ENCODE measurements at regions of chr15 and their contacts with region 1.

Region 1: DNA sequence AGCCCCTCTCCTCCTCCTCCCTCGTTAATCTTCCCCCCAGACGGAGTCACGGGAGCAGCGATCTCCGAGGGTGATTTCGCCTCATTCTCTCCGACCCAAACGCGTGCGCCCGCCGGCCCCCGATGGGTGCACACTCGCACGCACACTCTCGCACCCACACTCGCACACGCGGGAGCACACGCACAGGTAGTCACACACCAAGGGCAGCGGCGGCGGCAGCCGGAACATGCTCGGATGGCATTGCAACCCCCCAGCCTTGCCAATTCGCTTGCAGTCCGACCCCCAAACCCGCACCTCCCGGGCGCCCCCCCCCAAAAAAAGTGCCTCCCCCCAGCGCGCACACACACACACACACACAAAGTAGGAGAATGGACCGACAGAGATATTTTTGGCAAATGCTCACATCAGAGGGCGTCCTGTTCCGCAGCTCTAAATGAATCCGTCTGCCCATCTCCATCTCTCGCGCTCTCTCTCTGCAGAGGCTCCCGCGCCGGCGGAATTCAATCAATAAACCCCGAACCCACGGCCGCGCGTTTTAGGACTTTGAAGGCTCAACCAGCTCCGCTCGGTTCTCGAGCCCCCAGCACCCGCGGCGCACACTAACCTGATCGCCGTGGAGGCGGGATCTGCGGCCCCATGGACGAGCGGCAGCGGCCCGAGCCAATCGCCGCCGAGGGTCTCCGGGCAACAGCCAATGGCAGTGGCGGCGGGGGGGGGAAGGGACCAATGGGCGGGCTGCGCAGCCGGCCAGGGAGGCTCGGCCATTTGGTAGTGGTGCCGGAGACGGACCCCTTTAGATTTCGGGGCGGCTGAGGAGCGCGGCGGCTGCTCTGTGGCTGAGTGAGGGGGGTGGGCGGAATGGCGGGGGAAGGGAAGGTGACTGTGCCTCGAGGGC is at the start of gene ANP32A:
- DNase-seq: peak; percentile 81 to 98
- H3K4me3 ChIP-seq: peak within 1 kb of the TSS; percentile 90 to 96
- H3K27ac ChIP-seq: peak within 1 kb of the TSS; percentile 98
- H3K4me1 ChIP-seq: peaks cover 0 to 10% of the 10 kb centered on the region in 2 donors
- H3K27me3 ChIP-seq: no peaks in the 10 kb centered on the region
- CTCF ChIP-seq: no peak
- total RNA-seq, gene ANP32A: 19.2 TPM

Region 2: DNA sequence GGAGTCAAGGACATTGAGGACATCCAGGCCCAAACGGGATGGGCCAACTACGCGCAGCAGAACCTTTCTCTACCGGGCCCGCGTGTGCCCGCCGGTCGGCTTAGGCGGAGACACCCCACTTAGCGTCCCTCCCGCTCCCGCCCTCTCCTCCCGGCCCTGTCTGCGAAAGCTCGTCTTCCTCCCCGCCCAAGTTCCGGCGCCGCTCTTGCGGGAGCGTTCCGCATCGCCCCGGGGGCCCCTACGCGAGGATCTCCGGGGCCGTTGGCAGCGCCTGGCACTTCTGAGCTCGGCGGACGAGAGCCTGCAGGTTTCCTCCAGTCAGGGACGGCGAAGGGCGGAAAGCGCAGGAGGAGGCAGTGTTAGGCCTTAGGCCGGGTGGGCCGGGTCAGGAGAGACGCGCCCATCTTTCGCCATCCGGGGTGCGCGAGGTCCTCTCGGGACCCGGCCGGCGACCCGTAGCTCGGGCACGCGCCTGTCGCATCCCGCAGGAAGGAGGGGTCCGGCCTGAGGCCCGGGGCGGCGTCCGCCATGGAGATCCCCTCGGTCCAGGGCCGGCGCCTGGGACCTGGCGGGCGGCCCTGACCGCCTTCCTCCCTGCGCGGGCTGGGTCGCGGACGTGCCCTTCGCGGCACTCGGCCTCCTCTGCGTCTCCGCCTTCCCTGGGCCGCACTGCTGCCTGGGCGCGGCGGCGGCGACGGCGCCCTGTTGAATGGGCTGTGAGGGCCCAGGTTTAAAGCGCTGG is 542.8 kb before region 1 on chr15 and contains the start of gene FEM1B:
- intact Hi-C with region 1: loop called (anchors 5 kb)
- DNase-seq: peak; percentile 56 to 94
- H3K4me3 ChIP-seq: peak within 1 kb of the TSS; percentile 74 to 93
- H3K27ac ChIP-seq: peak within 1 kb of the TSS; percentile 99
- H3K4me1 ChIP-seq: peaks cover 3 to 24% of the 10 kb centered on the region in 2 donors
- H3K27me3 ChIP-seq: no peaks in the 10 kb centered on the region
- CTCF ChIP-seq: no peak
- total RNA-seq, gene FEM1B: 57.0 TPM

Region 3: GRCh38 chr15:68584756-68585573 is 235.6 kb before region 1 on chr15:
- intact Hi-C with region 1: loop called (anchors 5 kb)
- DNase-seq: no peak
- H3K4me3 ChIP-seq: no peak overlapping the region
- H3K27ac ChIP-seq: peak overlapping the region; percentile 74 to 81
- H3K4me1 ChIP-seq: peaks cover 4 to 18% of the 10 kb centered on the region in 2 donors
- H3K27me3 ChIP-seq: no peaks in the 10 kb centered on the region
- CTCF ChIP-seq: no peak

Region 4: GRCh38 chr15:68730471-68730919 is 90.0 kb before region 1 on chr15:
- intact Hi-C with region 1: loop called (anchors 5 kb)
- DNase-seq: peak in 1 of 2 donors; percentile 77
- H3K4me3 ChIP-seq: no peak overlapping the region
- H3K27ac ChIP-seq: no peak overlapping the region
- H3K4me1 ChIP-seq: peaks cover 7% of the 10 kb centered on the region in 2 donors
- H3K27me3 ChIP-seq: no peaks in the 10 kb centered on the region
- CTCF ChIP-seq: peak; percentile 48 to 76 (median 58)

Region 5: GRCh38 chr15:68775671-68776476 is 44.7 kb before region 1 on chr15:
- intact Hi-C with region 1: loop called (anchors 2 kb)
- DNase-seq: peak; percentile 25 to 93
- H3K4me3 ChIP-seq: peak overlapping the region in 1 of 2 donors; percentile 34
- H3K27ac ChIP-seq: peak overlapping the region; percentile 82 to 89
- H3K4me1 ChIP-seq: peaks cover 3 to 26% of the 10 kb centered on the region in 2 donors
- H3K27me3 ChIP-seq: no peaks in the 10 kb centered on the region
- CTCF ChIP-seq: no peak

Region 6: GRCh38 chr15:68795298-68795848 is 25.2 kb before region 1 on chr15:
- intact Hi-C with region 1: loop called (anchors 1 kb)
- DNase-seq: peak; percentile 84 to 94
- H3K4me3 ChIP-seq: peak overlapping the region; percentile 4 to 14
- H3K27ac ChIP-seq: peak overlapping the region; percentile 48 to 64
- H3K4me1 ChIP-seq: peaks cover 8 to 48% of the 10 kb centered on the region in 2 donors
- H3K27me3 ChIP-seq: no peaks in the 10 kb centered on the region
- CTCF ChIP-seq: no peak

Region 7: GRCh38 chr15:68875377-68876116 is 55.0 kb after region 1 on chr15:
- intact Hi-C with region 1: loop called (anchors 5 kb)
- DNase-seq: peak; percentile 55 to 95
- H3K4me3 ChIP-seq: peak overlapping the region; percentile 49 to 60
- H3K27ac ChIP-seq: no peak overlapping the region
- H3K4me1 ChIP-seq: peaks cover 0 to 2% of the 10 kb centered on the region in 2 donors
- H3K27me3 ChIP-seq: no peaks in the 10 kb centered on the region
- CTCF ChIP-seq: peak; percentile 81 to 89 (median 82)

Measured in ascending aorta (tissue), 2 donors.